HepG2 (cell line): ENCODE measurements at regions of chr2 and their contacts with region 1.

Region 1: GRCh38 chr2:157838442-157839161 is 37.5 kb downstream of the ACVR1 start:
- DNase-seq: peak; percentile 88
- ATAC-seq: peak; percentile 87
- H3K4me3 ChIP-seq: peak overlapping the region; percentile 53 to 63 (median 55); a peak in 5 of 6 replicates
- H3K27ac ChIP-seq: peak overlapping the region; percentile 85
- H3K4me1 ChIP-seq: peaks cover 76% of the 10 kb centered on the region
- H3K27me3 ChIP-seq: no peaks in the 10 kb centered on the region
- CTCF ChIP-seq: no peak
- EP300 ChIP-seq: peak in 1 of 2 experiments; percentile 75; a peak in 2 of 4 replicates
- POLR2A ChIP-seq: peak; percentile 37 to 51; a peak in 3 of 4 replicates
- RAD21 ChIP-seq: no peak

Region 2: DNA sequence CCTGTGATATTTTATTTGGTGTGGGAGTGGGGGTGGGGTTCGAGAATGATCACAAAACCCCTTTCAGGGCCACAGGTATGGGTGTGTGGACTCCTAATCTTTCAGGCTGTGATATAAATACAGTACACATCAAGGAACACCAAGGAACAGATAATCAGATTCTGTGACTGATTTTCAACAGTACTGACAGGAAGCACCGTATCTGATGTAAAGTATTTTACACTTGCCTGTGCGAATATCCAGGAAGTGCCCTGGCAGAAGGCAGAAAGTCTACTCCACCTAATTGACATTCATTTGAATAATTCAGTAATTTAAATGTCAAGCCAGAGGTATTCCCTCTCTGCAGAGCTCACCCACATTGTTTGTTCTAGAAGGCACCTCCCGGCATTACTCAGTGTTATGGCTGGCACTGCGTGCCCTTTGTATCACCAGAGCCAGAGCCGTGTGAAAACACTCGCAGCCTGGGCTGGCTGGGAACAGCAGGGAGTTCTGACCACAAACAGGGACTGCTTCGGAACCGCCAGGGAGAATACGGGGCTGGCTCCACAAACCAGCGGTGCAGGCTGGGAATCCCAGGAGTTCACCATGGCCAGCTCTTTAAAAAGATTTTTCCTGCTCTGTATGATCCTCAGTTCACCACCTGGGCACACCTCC is 54.3 kb before region 1 on chr2:
- CTCF ChIA-PET with region 1: no interaction called
- POLR2A ChIA-PET with region 1: no interaction called
- in situ Hi-C with region 1: no loop called
- intact Hi-C with region 1: loop called (anchors 5 kb)
- DNase-seq: no peak
- ATAC-seq: peak; percentile 47
- H3K4me3 ChIP-seq: no peak overlapping the region
- H3K27ac ChIP-seq: no peak overlapping the region
- H3K4me1 ChIP-seq: peaks cover 47% of the 10 kb centered on the region
- H3K27me3 ChIP-seq: no peaks in the 10 kb centered on the region
- CTCF ChIP-seq: no peak
- EP300 ChIP-seq: no peak
- POLR2A ChIP-seq: no peak
- RAD21 ChIP-seq: no peak

Region 3: DNA sequence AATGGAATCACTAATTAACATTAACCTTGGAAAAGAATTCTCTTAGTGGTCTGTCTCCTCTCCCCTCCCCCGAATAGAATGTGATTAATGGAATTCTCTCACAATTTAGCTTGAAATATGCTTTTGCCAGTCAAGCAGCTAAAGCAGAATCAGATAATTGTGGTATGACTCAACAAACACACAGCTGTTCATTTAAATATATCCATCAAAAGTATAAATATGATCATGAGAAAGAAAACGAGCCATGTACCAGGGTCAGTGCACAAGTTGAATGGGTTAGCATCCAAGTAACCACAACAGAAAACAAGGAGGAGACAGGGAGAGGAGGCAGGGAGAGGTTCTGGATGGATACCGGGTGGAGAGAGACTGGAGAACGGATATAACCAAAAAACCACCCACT is 29.4 kb before region 1 on chr2:
- CTCF ChIA-PET with region 1: no interaction called
- POLR2A ChIA-PET with region 1: no interaction called
- in situ Hi-C with region 1: no loop called
- intact Hi-C with region 1: no loop called
- DNase-seq: no peak
- ATAC-seq: no peak
- H3K4me3 ChIP-seq: no peak overlapping the region
- H3K27ac ChIP-seq: no peak overlapping the region
- H3K4me1 ChIP-seq: peaks cover 9% of the 10 kb centered on the region
- H3K27me3 ChIP-seq: no peaks in the 10 kb centered on the region
- CTCF ChIP-seq: no peak
- EP300 ChIP-seq: no peak
- POLR2A ChIP-seq: no peak
- RAD21 ChIP-seq: no peak